Ascending aorta (tissue), 2 donors: ENCODE measurements at regions of chr4 and their contacts with region 1.

Region 1: DNA sequence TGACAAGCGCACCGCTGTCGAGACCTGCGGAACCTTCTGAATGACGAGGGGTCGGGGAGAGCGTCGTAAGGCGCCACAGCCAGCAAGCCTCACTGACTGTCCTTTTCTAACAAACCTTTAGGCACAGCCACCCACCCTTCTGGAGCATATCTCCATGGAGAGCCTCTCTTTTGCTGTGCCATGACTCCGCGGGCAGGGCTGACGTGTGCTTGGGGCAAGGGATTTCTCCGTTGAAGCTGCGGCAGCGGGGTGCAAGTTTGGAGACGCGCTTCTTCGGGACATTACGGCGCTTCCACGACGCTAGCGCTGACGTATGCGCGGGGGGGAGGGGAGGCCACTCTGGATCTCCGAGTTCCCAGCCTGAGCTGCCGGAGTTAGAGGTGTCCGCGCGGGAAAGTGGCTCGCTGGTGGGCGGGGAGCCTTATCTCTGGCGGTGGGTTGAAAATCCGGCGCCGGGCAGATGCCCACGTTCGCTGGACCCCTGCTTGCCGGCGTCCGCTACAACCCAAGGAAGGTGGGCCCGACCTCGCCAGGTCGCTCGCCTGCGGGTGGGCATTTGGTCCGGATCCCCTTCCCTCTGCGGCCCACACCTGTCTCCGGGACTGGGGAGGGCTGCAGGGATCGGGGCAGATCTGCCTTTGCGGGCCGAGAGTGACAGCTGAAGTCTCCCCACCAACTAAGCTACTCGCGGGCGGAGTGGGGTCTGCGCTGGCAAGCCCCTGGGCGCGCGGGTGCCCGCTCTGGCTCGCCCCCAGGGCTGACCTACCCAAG is 543 bp upstream of the SLC10A7 start:
- DNase-seq: peak; percentile 53 to 94
- H3K4me3 ChIP-seq: peak overlapping the region; percentile 81 to 94
- H3K27ac ChIP-seq: peak overlapping the region; percentile 63 to 78
- H3K4me1 ChIP-seq: no peaks in the 10 kb centered on the region
- H3K27me3 ChIP-seq: no peaks in the 10 kb centered on the region
- CTCF ChIP-seq: no peak

Region 2: DNA sequence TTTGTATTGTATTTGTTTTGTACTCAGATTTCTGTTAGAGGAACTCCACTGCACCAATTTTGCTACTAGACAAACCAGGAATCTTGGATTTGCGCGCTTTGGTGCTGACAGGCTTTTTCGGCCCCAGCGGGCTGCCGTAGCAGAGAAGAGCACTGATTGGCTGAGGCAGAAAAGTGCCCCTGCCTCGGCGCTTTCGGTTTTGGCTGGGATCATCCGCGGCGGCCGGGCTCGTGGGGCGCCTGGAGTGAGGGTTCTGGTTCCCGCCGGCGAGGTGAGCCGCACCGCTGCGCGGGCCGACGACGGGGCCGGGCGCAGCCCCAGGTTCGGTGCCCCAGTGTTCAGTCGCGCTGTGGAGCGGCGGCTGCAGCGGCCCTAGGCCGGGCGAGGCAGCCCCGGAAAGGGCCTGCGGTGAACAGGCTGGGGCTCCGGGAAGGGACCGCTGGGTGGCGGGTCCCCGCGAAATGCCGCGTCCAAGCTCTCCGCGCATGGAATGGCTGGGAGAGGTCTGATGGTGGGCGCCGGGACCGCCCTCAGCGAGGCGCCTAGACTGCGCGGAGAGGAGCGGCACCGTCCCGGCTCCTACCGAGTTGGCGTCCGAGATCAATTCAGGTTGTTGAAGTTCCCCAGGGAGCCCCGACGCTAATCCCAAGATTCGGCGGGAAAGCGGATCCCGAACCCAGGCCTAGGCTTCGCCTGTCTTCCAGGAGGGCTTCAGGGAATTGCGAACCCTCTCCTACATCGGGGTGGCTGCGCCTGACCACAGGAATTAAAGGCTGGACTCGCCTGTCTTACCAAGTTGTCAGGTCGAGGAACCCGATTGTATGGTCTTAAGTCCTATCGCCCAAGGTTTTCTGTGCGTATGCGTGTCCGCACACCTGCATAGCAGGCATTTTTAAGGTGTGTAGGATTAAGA is 346.5 kb before region 1 on chr4 and contains the start of gene LSM6:
- intact Hi-C with region 1: loop called (anchors 1 kb)
- DNase-seq: peak; percentile 39 to 91
- H3K4me3 ChIP-seq: peak within 1 kb of the TSS; percentile 95 to 99
- H3K27ac ChIP-seq: peak within 1 kb of the TSS; percentile 95
- H3K4me1 ChIP-seq: peaks cover 2 to 17% of the 10 kb centered on the region in 2 donors
- H3K27me3 ChIP-seq: no peaks in the 10 kb centered on the region
- CTCF ChIP-seq: peak in 1 of 3 experiments; percentile 21
- total RNA-seq, gene LSM6: 10.7 TPM

Region 3: GRCh38 chr4:146342600-146343192 is 179.6 kb before region 1 on chr4:
- intact Hi-C with region 1: loop called (anchors 5 kb)
- DNase-seq: no peak
- H3K4me3 ChIP-seq: no peak overlapping the region
- H3K27ac ChIP-seq: no peak overlapping the region
- H3K4me1 ChIP-seq: no peaks in the 10 kb centered on the region
- H3K27me3 ChIP-seq: no peaks in the 10 kb centered on the region
- CTCF ChIP-seq: peak in 2 of 3 experiments; percentile 34 to 69

Region 4: DNA sequence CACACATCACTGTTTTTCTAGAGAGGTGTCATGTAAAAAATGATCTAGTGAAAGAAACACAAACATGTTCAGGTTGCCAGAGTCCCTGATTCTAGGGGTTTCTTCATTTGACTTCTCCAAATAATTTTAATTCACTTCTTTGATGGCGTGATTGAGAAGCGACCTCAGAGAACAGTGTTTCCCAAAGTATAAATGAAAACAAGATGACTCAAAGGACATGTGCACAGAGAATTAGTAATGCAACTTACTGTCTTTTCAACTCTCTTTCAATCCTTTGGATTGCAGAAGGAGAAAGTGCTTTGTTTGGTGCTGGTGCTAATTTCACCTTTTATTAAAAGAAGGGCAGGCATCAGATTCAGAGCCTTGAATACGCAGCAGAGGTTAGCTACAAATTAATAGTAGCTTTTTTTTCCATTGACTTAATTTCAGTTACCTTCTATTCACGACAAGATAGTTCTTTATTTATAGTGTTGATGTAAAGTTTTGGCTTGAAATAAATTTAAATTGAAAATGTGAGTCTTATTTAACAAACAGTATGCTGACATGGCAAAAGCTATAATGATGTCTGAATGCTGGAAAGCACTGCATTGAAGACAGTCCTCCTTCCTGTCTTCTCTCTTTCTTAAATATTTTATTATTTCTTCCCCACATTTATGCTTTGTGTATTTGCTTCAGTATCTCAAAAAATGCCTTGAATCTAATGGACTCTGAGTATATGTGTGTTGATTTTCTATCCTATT is 85.7 kb before region 1 on chr4:
- intact Hi-C with region 1: loop called (anchors 5 kb)
- DNase-seq: no peak
- H3K4me3 ChIP-seq: no peak overlapping the region
- H3K27ac ChIP-seq: no peak overlapping the region
- H3K4me1 ChIP-seq: no peaks in the 10 kb centered on the region
- H3K27me3 ChIP-seq: no peaks in the 10 kb centered on the region
- CTCF ChIP-seq: no peak

Region 5: GRCh38 chr4:147103403-147103946 is 581.2 kb after region 1 on chr4:
- intact Hi-C with region 1: loop called (anchors 5 kb)
- DNase-seq: peak; percentile 73 to 95
- H3K4me3 ChIP-seq: no peak overlapping the region
- H3K27ac ChIP-seq: peak overlapping the region; percentile 72 to 78
- H3K4me1 ChIP-seq: peaks cover 0 to 14% of the 10 kb centered on the region in 2 donors
- H3K27me3 ChIP-seq: no peaks in the 10 kb centered on the region
- CTCF ChIP-seq: no peak

Region 6: GRCh38 chr4:147617173-147617840 is 1095.0 kb after region 1 on chr4 and contains the start of gene TMEM184C:
- intact Hi-C with region 1: loop called (anchors 5 kb)
- DNase-seq: peak; percentile 96 to 99
- H3K4me3 ChIP-seq: peak within 1 kb of the TSS; percentile 82 to 91
- H3K27ac ChIP-seq: peak within 1 kb of the TSS; percentile 64 to 84
- H3K4me1 ChIP-seq: peaks cover 0 to 20% of the 10 kb centered on the region in 2 donors
- H3K27me3 ChIP-seq: no peaks in the 10 kb centered on the region
- CTCF ChIP-seq: peak in 1 of 3 experiments; percentile 6
- total RNA-seq, gene TMEM184C: 14.2 TPM